ENCODE measurements at regions of chr16 and their contacts with region 1.

Region 1: DNA sequence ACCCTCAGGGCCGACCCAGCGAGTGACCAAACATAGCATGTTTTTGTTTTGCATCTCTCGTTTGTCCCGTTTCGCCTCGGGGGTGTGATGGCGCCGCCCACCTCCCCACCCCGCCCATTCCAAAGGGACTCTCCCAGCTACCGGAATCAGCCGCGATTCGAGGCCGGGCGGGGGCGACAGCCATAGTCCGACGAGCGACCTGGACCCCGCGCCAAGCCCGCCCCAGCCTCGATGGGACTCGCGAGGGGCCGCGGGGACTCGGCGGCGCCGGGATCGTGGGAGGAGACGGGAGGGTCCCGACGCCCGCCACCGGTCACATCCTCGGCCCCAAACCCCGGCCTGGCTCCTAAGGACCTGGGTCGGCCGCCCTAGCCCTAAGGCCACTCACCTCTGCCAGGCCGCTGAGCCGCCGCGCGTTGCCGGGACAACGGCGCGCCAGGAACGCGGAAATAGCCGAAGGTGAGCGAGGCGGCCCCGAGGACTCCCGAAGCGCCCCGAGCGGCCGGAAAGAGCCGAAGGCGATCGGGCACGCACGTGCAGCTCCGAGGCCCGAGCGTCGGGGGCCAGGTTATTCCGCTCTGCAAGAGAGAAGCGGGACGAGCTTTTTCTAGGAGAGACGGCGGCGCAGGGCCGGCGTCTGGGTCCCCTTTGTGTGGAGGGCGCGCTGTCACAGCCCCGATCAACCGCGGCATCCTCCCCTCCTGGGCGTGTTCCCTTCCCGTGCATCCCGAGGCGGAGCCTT is 1.4 kb downstream of the IFT140 start:
- DNase-seq: peak; percentile 93
- ATAC-seq: peak; percentile 78

Region 2: GRCh38 chr16:1492923-1493745 is 117.3 kb before region 1 on chr16 and contains the start of gene TELO2:
- intact Hi-C with region 1: loop called (anchors 1 kb)
- DNase-seq: peak; percentile 90
- ATAC-seq: peak; percentile 88
- total RNA-seq, gene TELO2: 18.9 TPM

Region 3: DNA sequence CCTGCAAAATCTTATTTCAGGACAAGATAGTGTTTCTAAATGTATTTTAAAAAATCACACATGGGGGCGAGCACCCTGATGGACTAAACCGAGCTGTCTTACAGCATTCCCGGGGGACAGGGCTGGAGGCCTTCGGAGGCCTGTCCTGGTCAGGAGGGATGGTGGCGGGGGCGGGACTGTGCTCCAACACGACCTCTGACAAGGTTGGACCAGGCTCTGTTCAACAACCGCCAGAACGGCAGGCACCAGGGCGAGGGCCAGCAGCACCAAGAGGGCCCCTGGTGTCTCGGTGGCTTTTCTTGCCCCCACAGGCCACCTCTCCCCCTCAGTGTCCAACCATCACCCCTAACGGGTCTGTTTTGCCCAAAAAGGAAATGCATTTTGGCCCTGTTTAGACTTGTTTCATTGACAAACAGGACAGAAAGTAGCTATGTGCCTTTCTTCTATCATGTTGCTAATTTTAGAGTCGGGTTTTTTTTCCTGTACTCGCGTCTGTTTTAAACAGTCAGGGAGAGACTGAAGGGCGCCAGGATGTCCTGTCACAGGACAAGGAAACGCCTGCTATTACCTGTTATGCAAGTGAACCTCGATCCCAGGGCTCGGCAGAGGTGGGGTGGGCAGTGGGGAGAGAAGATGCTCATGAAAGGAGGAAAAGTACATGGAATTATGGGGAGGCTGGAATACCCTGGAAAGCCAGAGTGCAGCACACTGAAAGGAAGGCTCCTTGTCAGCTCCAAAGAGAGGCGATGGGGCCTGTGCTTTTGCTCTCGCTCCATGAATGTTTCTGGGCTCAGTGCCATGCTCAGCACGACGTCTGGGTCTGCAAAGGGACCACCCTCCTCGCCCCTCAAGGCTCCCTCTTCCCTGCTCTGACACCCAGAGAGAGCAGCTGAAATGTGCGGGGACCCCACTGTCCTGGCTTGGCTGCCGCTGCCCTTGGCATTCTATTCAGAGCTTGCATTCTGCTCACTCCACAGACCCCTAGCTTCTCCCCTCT is 65.1 kb before region 1 on chr16:
- intact Hi-C with region 1: loop called (anchors 5 kb)
- DNase-seq: peak; percentile 82
- ATAC-seq: peak; percentile 81

Region 4: GRCh38 chr16:1645914-1646525 is 35.6 kb after region 1 on chr16:
- intact Hi-C with region 1: no loop called
- DNase-seq: no peak
- ATAC-seq: no peak

Region 5: DNA sequence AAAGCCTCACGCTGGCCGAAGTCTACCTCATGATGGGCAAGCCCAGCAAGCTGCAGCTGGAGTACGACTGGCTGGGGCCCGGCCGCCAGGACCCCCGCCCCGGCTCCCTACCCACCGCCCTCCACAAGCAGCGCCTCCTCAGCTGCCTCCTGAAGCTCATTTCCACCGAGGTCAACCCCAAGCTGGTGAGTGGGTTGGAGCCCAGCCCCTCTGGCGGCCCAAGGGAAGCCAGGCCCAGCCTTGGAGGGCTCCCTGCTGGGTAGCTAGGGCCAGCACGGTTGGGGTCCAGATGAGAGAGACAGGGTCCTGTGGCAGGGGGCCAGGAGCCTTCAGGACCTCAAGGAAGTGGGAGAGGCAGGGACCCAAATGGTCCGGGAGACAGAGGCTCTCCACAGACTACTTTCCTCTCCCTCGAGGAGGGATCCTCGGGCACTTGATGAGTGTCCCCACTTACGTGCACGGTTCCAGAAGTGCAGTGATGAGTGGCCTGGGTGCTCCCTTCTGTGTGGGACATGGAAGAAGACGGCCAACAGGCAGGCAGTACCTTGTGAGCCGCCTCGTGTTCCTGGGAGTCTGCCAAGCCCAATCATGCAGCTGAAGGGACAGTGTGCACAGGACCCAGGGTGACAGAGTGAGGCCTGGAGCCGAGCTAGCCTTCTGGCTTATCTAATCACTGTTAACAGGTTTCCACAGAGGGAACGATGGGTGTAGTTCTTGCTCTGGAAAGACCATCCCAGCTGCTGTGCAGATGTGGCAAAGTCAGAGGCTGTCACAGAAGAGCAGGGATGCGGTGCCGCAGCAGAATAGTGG is 46.6 kb after region 1 on chr16:
- intact Hi-C with region 1: no loop called
- DNase-seq: no peak
- ATAC-seq: peak; percentile 89

Region 6: DNA sequence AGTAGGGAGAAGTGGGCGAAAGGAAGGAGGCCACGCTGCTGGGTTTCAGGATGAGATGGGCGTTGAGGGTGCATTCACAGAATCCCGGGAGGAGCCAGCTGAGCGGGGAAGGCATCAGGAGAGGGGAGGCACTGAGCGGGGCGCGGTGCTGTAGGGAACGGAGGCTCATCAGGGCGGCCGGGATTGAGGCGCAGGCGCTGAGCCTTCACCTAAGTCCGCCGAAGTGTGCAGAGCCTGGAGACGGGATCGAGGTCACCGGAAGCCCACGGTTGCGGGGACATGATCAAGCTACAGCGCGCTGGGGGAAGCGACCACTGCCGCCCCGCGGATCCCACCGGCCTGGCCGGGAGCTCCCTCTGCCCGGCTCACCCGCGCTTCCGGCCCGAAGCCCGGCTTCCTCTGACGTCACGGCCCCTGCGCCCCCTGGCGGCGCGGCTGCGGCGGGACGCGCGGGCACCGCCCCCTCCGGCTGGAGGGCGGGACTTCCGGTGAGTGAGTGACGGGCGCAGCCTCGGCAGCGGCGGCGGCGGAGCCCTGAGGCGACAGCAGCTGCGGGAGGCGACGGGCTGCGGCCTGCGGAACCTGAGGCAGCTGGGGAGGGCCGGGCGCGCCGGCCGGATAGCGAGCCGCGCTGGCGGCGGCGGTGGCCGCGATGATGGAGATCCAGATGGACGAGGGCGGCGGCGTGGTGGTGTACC is 95.4 kb after region 1 on chr16 and contains the start of gene MAPK8IP3:
- intact Hi-C with region 1: loop called (anchors 5 kb)
- DNase-seq: peak; percentile 95
- ATAC-seq: peak; percentile 95
- total RNA-seq, gene MAPK8IP3: 66.4 TPM

Region 7: GRCh38 chr16:2603165-2604015 is 992.9 kb after region 1 on chr16:
- intact Hi-C with region 1: no loop called
- DNase-seq: peak; percentile 95
- ATAC-seq: peak; percentile 93